Pancreas (tissue), 10 donors: ENCODE measurements at regions of chr7 and their contacts with region 1.

Region 1: DNA sequence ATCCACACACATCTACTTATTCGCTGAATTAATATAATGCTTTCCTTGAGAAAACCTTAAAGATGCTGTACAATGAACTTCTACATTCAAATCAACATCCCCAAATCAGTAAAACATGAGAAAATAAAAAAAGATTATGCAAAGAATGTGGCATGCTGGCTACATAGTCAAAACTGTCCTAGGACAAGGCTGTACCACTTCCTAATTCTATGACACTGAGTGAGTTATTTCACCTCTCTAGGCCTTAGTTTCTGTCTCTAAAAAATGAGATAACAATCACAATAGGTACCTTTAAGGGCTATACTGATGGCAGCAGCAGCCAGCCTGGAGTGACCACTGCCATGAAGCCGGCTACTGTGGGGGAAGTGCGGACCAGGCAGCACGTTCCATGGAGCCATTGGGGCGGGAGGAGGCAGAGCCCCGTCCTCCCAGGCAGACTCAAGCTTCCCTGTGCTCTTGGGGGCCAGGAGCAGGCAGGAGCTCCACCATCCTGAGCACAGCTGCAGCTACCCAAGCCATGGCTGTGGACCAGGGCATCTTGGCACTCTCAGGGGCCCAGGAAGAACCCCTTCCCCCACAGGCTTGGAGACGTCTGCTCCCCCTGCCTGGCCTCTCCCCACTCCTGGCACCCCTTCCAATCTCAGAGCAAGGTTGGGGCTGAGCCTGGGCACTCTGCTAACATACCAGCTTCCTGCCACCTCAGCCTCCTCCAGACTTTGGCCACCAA is 110.2 kb downstream of the ELAPOR2 start:
- DNase-seq: peak in 1 of 6 donors; percentile 45
- ATAC-seq: no peak
- H3K4me3 ChIP-seq: no peak overlapping the region
- H3K27ac ChIP-seq: no peak overlapping the region
- H3K4me1 ChIP-seq: no peaks in the 10 kb centered on the region
- H3K27me3 ChIP-seq: no peaks in the 10 kb centered on the region
- CTCF ChIP-seq: no peak

Region 2: GRCh38 chr7:86733783-86734182 is 215.4 kb before region 1 on chr7:
- intact Hi-C with region 1: no loop called
- DNase-seq: no peak
- ATAC-seq: no peak
- H3K4me3 ChIP-seq: no peak overlapping the region
- H3K27ac ChIP-seq: no peak overlapping the region
- H3K4me1 ChIP-seq: peaks cover 0 to 3% (median 0%) of the 10 kb centered on the region in 3 donors
- H3K27me3 ChIP-seq: no peaks in the 10 kb centered on the region
- CTCF ChIP-seq: no peak

Region 3: GRCh38 chr7:87148332-87148955 is 199.2 kb after region 1 on chr7:
- intact Hi-C with region 1: loop called in 2 of 3 experiments (anchors 10 kb)
- DNase-seq: no peak
- ATAC-seq: no peak
- H3K4me3 ChIP-seq: no peak overlapping the region
- H3K27ac ChIP-seq: no peak overlapping the region
- H3K4me1 ChIP-seq: peaks cover 0 to 8% (median 0%) of the 10 kb centered on the region in 3 donors
- H3K27me3 ChIP-seq: no peaks in the 10 kb centered on the region
- CTCF ChIP-seq: peak in 1 of 4 donors; percentile 26